ENCODE measurements at regions of chr17 and their contacts with region 1.

Region 1: GRCh38 chr17:44218344-44219107 is 949 bp downstream of the UBTF start:
- DNase-seq: peak; percentile 83
- ATAC-seq: peak; percentile 66
- H3K4me3 ChIP-seq: peak overlapping the region; percentile 61
- H3K27ac ChIP-seq: peak overlapping the region; percentile 92
- H3K4me1 ChIP-seq: peaks cover 12% of the 10 kb centered on the region
- H3K27me3 ChIP-seq: no peaks in the 10 kb centered on the region
- CTCF ChIP-seq: peak; percentile 66
- POLR2A ChIP-seq: peak; percentile 42; the same call in 1 of the 2 replicates
- RAD21 ChIP-seq: peak; percentile 31

Region 2: DNA sequence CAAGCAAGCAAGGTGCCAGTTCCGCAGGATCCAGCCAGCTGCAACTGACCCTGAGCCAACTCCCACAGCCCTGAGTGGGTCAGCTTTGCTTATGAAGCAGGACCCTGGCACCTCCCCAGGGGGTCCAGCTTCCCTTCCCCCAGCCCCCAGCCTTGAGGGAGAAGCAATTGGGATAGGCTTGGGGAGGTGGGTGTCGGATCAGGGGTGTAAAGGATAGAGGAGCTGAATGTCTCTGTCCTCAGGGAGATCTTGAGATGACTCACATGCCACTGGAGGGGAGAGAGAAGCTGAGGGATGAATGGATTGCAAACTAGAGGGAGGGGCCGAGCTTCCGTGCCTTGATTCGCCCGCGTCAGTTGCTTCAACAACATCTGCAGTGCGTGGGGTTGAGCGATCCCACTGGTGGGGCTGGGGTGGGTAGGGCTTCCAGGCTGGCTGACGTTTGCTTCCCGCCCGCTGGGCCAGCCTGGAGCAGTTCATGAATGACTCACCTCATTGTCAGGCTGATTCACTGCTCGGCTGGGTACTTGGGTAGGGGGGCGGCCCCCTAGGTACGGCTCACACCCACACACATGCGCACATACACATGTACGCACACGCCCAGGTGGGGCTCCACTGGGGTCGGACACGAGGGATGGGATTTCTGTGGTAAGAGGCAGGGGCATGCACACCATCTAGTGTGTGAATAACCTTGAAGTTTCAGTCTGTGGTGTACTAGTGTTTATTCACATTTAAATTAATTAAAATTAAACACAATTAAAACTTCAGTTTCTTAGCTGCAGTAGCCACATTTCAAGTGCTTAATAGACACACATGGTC is 80.4 kb before region 1 on chr17:
- CTCF ChIA-PET with region 1: no interaction called
- POLR2A ChIA-PET with region 1: no interaction called
- dilution Hi-C with region 1: no loop called
- in situ Hi-C with region 1: no loop called
- intact Hi-C with region 1: no loop called
- DNase-seq: peak; percentile 100
- ATAC-seq: peak; percentile 95
- H3K4me3 ChIP-seq: peak overlapping the region; percentile 24; the same call in 1 of the 2 replicates
- H3K27ac ChIP-seq: peak overlapping the region; percentile 78
- H3K4me1 ChIP-seq: peaks cover 10% of the 10 kb centered on the region
- H3K27me3 ChIP-seq: no peaks in the 10 kb centered on the region
- CTCF ChIP-seq: no peak
- POLR2A ChIP-seq: peak; percentile 66; the same call in 1 of the 2 replicates
- RAD21 ChIP-seq: no peak; the same call in none of the 2 replicates

Region 3: GRCh38 chr17:44170499-44171201 is 47.9 kb before region 1 on chr17 and contains the start of gene ASB16:
- CTCF ChIA-PET with region 1: no interaction called
- POLR2A ChIA-PET with region 1: no interaction called
- dilution Hi-C with region 1: no loop called
- in situ Hi-C with region 1: no loop called
- intact Hi-C with region 1: no loop called
- DNase-seq: peak; percentile 55
- ATAC-seq: peak; percentile 72
- H3K4me3 ChIP-seq: no peak within 1 kb of the TSS
- H3K27ac ChIP-seq: no peak within 1 kb of the TSS
- H3K4me1 ChIP-seq: peaks cover 11% of the 10 kb centered on the region
- H3K27me3 ChIP-seq: no peaks in the 10 kb centered on the region
- CTCF ChIP-seq: no peak
- POLR2A ChIP-seq: no peak
- RAD21 ChIP-seq: no peak
- total RNA-seq, gene ASB16: not detected in 2 replicates

Region 4: GRCh38 chr17:44308320-44308818 is 89.8 kb after region 1 on chr17 and contains the start of gene RUNDC3A:
- CTCF ChIA-PET with region 1: no interaction called
- POLR2A ChIA-PET with region 1: no interaction called
- dilution Hi-C with region 1: no loop called
- in situ Hi-C with region 1: no loop called
- intact Hi-C with region 1: loop called (anchors 5 kb)
- DNase-seq: peak; percentile 69
- ATAC-seq: peak; percentile 100
- H3K4me3 ChIP-seq: peak within 1 kb of the TSS; percentile 41
- H3K27ac ChIP-seq: no peak within 1 kb of the TSS
- H3K4me1 ChIP-seq: peaks cover 4% of the 10 kb centered on the region; the same call in 1 of the 2 replicates
- H3K27me3 ChIP-seq: peaks cover 50% of the 10 kb centered on the region
- CTCF ChIP-seq: no peak
- POLR2A ChIP-seq: no peak
- RAD21 ChIP-seq: no peak
- total RNA-seq, gene RUNDC3A: under 0.01 TPM in 2 replicates

Region 5: DNA sequence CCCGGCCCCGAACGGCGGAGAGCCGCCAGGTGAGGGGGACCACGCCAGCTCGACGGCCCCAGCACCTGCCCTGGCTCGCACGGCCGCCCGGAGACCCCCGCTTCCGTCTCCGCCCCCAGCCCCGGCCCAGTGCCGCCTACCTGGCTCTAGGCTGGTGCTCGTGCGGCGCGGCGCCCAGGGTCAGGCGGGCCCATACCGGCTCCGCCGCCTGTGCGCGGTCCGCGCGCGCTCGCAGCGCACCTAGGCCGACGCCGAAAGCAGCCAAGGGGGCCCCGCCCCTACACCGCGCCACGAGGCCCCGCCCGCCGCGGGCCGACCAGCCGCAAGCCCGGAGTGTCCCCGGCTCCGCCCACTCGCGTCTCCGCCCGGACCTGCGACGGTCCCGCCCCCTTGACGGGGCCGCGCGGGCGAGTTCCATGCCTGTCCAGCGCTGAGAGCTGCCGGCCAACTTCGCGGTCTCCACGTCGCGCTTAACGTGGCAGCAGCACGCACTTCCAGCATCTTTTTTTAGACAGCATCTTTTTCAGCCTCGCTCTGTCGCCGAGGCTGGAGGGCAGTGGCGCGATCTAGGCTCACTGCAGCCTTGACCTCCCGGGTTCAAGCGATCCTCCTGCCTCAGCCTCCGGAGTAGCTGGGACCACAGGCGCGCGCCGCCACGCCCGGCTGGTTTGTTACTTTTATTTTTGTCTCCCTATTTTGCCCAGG is 106.2 kb after region 1 on chr17 and contains the start of gene SLC25A39:
- CTCF ChIA-PET with region 1: no interaction called
- POLR2A ChIA-PET with region 1: interaction called, 14 read pairs
- dilution Hi-C with region 1: no loop called
- in situ Hi-C with region 1: loop called (anchors 5 kb)
- intact Hi-C with region 1: loop called (anchors 1 kb)
- DNase-seq: peak; percentile 93
- ATAC-seq: peak; percentile 95
- H3K4me3 ChIP-seq: peak within 1 kb of the TSS; percentile 88
- H3K27ac ChIP-seq: peak within 1 kb of the TSS; percentile 49
- H3K4me1 ChIP-seq: peaks cover 9% of the 10 kb centered on the region
- H3K27me3 ChIP-seq: no peaks in the 10 kb centered on the region
- CTCF ChIP-seq: no peak
- POLR2A ChIP-seq: peak; percentile 41; the same call in 1 of the 2 replicates
- RAD21 ChIP-seq: no peak
- total RNA-seq, gene SLC25A39: 49.1 and 49.2 TPM in 2 replicates

Region 6: DNA sequence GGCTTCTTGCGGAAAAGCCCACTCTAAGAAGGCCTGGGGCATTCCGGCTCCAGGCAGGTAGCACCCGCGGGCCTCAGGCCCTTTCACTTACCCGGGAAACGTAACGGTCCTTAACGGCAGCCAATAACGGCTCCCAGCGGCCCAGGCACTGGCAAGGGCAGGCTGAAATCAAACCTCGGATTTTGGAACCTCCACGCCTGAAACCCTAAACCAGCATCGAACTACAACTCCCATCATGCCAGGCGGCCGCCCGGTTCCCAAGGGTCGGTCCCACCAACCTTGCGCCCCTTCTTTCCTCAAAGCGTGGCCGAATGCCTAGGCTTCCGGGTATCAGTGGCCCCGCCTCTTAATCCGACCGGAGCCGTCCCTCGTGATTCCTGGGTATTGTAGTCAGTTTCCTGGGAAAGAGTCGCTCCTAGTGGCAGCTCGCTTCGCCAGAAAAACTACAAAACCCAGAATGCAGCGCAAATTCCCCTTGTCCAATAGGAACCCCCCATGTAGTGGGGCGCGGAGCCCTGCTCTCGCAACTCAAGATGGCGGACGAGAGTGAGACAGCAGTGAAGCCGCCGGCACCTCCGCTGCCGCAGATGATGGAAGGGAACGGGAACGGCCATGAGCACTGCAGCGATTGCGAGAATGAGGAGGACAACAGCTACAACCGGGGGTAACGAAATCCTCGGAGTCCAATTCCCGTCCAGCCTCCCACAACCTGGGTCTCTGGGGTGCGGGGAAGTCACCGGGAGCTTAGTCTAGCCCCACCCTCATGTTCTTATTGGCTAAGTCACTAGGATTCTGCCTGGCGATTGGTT is 842.5 kb after region 1 on chr17 and contains the start of gene NMT1:
- CTCF ChIA-PET with region 1: no interaction called
- POLR2A ChIA-PET with region 1: interaction called, 10 read pairs
- dilution Hi-C with region 1: no loop called
- in situ Hi-C with region 1: no loop called
- intact Hi-C with region 1: no loop called
- DNase-seq: peak; percentile 99
- ATAC-seq: peak; percentile 95
- H3K4me3 ChIP-seq: peak within 1 kb of the TSS; percentile 66
- H3K27ac ChIP-seq: peak within 1 kb of the TSS; percentile 85
- H3K4me1 ChIP-seq: peaks cover 6% of the 10 kb centered on the region; the same call in 1 of the 2 replicates
- H3K27me3 ChIP-seq: no peaks in the 10 kb centered on the region
- CTCF ChIP-seq: no peak
- POLR2A ChIP-seq: peak; percentile 96
- RAD21 ChIP-seq: no peak
- total RNA-seq, gene NMT1: 57.5 and 60.6 TPM in 2 replicates